Posterior vena cava (tissue), 2 donors: ENCODE measurements at regions of chr9 and their contacts with region 1.

Region 1: GRCh38 chr9:83445703-83446265 is 92.4 kb downstream of the FRMD3 start:
- DNase-seq: no peak

Region 2: DNA sequence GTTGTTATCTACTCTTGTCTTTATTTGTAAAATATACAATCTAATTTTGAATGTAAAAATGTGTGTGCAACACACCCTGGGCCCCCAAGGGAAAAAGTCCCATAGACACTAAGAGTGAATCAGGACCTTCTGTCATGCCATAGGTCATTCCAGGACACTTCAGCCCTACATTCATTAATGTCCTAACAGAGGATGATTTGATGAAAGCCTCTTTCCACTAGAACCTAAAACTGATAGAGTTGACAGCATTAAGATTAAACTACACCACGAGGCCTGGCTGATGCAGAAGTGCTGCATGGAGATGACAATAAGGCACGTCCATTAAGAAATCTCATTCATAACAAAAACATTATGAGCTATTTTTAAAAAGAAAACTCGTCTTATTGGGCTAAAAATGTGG is 46.2 kb after region 1 on chr9:
- intact Hi-C with region 1: loop called in 1 of 2 experiments (anchors 1 kb)
- DNase-seq: no peak